ENCODE measurements at regions of chr5 and their contacts with region 1.

Region 1: GRCh38 chr5:138178516-138179276 is at the starts of genes BRD8 and KIF20A:
- DNase-seq: peak; percentile 98
- H3K4me3 Mint-ChIP-seq: no peak within 1 kb of the TSS
- H3K27ac Mint-ChIP-seq: peak within 1 kb of the TSS; percentile 63
- H3K4me1 Mint-ChIP-seq: peaks cover 12% of the 10 kb centered on the region
- H3K27me3 Mint-ChIP-seq: no peaks in the 10 kb centered on the region
- total RNA-seq, gene BRD8: 94.8 to 95.6 TPM
- total RNA-seq, gene KIF20A: 78.9 to 81.9 TPM

Region 2: DNA sequence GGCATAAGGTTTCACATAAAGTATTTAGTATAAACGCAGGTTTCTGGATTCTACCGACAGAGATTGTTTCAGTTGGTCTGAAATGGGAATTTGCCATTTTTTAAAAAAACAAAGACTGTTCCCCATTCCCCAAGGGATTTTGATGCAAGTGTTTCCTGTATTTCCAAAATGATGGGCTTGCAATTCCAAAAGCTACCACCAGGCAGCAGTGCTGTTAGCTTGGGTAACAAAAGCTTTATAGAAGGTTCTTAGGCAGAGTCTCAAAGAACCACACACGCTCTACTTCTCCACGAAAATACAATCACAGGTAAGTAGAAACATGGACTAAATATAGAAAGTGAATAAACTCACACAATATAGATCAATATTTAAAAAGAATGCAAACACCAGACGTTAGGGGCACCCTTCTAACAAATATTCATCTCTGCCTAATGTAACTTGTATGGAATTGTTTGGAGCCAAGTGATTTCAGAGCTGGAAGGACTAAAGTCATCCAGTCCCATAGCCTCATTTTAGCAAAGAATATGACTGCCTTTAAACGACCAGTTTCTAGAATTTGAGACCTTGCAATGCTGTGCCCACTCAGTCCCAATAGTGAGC is 833.9 kb before region 1 on chr5:
- CTCF ChIA-PET with region 1: no interaction called
- intact Hi-C with region 1: no loop called
- DNase-seq: peak; percentile 28
- H3K4me3 Mint-ChIP-seq: no peak overlapping the region
- H3K27ac Mint-ChIP-seq: no peak overlapping the region
- H3K4me1 Mint-ChIP-seq: no peaks in the 10 kb centered on the region
- H3K27me3 Mint-ChIP-seq: peaks cover 3% of the 10 kb centered on the region

Region 3: DNA sequence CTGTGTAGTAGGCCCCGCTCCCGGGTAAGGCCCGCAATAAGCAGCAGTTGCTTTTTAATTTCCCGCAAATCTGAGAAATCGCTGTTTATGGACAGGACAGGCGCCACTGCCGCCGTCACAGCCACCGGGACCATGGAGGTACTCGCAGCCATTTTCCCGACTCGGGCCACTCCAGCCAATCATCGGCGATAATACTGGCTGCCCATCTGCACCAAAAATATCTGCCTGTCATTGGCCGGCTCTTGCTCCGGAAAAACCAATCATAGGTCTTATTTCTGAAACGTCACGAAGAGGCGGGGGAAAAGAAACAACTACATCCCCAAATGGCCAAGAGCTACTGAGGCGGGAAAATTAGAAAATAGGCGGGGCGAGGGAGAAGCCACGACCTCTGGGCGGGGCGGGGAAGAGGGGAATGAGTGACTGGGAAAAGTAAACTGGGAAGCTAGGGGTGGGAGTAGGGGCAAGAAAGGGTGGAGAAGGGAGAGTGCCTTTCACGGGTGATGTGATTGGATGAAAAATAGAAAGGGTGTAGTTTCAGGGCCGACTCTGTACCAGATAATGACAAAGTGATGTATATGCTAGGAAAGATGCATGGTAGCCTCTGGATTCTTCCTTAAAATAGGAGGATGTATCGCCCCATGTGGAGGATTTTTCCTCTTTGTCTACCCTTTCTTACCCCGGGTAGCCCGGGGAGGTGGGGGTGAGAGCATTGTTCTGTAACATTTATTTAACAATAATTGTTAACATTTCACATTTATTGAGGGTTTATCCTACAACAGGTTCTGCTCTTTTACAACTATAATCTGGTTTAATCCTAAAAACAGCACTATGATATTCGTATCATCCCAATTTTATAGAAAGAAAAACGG is 34.7 kb after region 1 on chr5 and contains the start of gene CDC23:
- CTCF ChIA-PET with region 1: interaction called, 5 read pairs
- intact Hi-C with region 1: loop called (anchors 1 kb)
- DNase-seq: peak; percentile 96
- H3K4me3 Mint-ChIP-seq: peak within 1 kb of the TSS; percentile 98
- H3K27ac Mint-ChIP-seq: peak within 1 kb of the TSS; percentile 89
- H3K4me1 Mint-ChIP-seq: peaks cover 18% of the 10 kb centered on the region
- H3K27me3 Mint-ChIP-seq: no peaks in the 10 kb centered on the region
- total RNA-seq, gene CDC23: 44.3 to 47.2 TPM

Region 4: GRCh38 chr5:138331449-138332368 is 153.0 kb after region 1 on chr5 and contains the start of gene CDC25C:
- CTCF ChIA-PET with region 1: interaction called, 5 read pairs
- intact Hi-C with region 1: loop called (anchors 1 kb)
- DNase-seq: peak; percentile 99
- H3K4me3 Mint-ChIP-seq: peak within 1 kb of the TSS; percentile 81
- H3K27ac Mint-ChIP-seq: peak within 1 kb of the TSS; percentile 83
- H3K4me1 Mint-ChIP-seq: peaks cover 9% of the 10 kb centered on the region
- H3K27me3 Mint-ChIP-seq: no peaks in the 10 kb centered on the region
- total RNA-seq, gene CDC25C: 23.2 to 26.6 TPM

Region 5: GRCh38 chr5:138408023-138408422 is 229.3 kb after region 1 on chr5:
- CTCF ChIA-PET with region 1: interaction called, 6 read pairs
- intact Hi-C with region 1: loop called (anchors 1 kb)
- DNase-seq: peak; percentile 73
- H3K4me3 Mint-ChIP-seq: no peak overlapping the region
- H3K27ac Mint-ChIP-seq: peak overlapping the region; percentile 74
- H3K4me1 Mint-ChIP-seq: peaks cover 11% of the 10 kb centered on the region
- H3K27me3 Mint-ChIP-seq: no peaks in the 10 kb centered on the region

Region 6: GRCh38 chr5:138491669-138492559 is 313.2 kb after region 1 on chr5:
- CTCF ChIA-PET with region 1: no interaction called
- intact Hi-C with region 1: loop called (anchors 1 kb)
- DNase-seq: peak; percentile 85
- H3K4me3 Mint-ChIP-seq: peak overlapping the region; percentile 89
- H3K27ac Mint-ChIP-seq: no peak overlapping the region
- H3K4me1 Mint-ChIP-seq: peaks cover 11% of the 10 kb centered on the region
- H3K27me3 Mint-ChIP-seq: peaks cover 11% of the 10 kb centered on the region

Region 7: GRCh38 chr5:138542956-138543729 is 364.4 kb after region 1 on chr5 and contains the start of gene ETF1:
- CTCF ChIA-PET with region 1: interaction called, 6 read pairs
- intact Hi-C with region 1: loop called (anchors 1 kb)
- DNase-seq: peak; percentile 100
- H3K4me3 Mint-ChIP-seq: peak within 1 kb of the TSS; percentile 100
- H3K27ac Mint-ChIP-seq: peak within 1 kb of the TSS; percentile 100
- H3K4me1 Mint-ChIP-seq: peaks cover 71% of the 10 kb centered on the region
- H3K27me3 Mint-ChIP-seq: no peaks in the 10 kb centered on the region
- total RNA-seq, gene ETF1: 99.8 to 107 TPM